ENCODE measurements at regions of chr1 and their contacts with region 1.

Region 1: GRCh38 chr1:32933742-32934322 is 30.8 kb downstream of the RNF19B start:
- DNase-seq: no peak
- ATAC-seq: no peak; the same call in 1 of the 2 replicates
- H3K4me3 Mint-ChIP-seq: no peak overlapping the region
- H3K27ac Mint-ChIP-seq: peak overlapping the region; percentile 94
- H3K4me1 Mint-ChIP-seq: peaks cover 7% of the 10 kb centered on the region
- H3K27me3 Mint-ChIP-seq: peaks cover 5% of the 10 kb centered on the region
- CTCF ChIP-seq: no peak

Region 2: DNA sequence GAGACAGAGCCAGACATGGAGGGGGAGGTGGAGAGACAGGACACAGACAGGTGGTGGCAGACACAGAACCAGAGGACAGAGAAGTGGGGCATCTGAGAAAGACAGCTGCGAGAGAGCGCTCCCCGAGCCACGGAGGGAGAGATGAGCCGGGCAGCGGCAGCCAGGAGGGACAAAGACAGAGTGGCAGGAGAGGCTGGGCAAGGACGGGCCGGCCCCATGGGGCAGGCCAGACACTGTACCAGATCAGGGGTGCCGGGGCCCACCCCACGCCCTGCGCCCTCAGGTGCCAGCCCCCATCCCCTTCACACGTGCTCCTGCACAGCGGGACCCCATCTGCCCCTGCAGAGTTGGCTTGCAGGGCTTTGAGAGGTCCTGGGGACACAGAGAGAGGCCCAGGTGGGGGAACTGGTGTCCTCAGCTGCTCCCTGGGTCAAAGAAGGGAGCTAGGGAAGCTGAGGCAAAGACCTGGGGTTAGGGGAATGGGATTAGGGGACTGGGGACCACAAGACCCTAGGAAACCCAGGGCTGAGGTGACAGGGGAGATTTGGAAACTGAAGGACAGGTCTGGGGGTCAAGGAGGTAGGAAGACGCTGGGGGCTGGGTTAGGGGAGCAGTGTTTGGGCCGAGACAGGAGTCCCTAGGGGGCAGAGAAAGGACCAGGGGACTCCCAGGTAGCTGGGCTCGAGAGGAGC is 63.8 kb before region 1 on chr1:
- CTCF ChIA-PET with region 1: no interaction called
- POLR2A ChIA-PET with region 1: no interaction called
- DNase-seq: no peak
- ATAC-seq: peak; percentile 3; the same call in 1 of the 2 replicates
- H3K4me3 Mint-ChIP-seq: peak overlapping the region; percentile 76
- H3K27ac Mint-ChIP-seq: no peak overlapping the region
- H3K4me1 Mint-ChIP-seq: peaks cover 24% of the 10 kb centered on the region
- H3K27me3 Mint-ChIP-seq: peaks cover 39% of the 10 kb centered on the region
- CTCF ChIP-seq: no peak

Region 3: GRCh38 chr1:32892368-32893197 is 41.2 kb before region 1 on chr1:
- CTCF ChIA-PET with region 1: interaction called, 14 read pairs
- POLR2A ChIA-PET with region 1: no interaction called
- DNase-seq: peak; percentile 92
- ATAC-seq: peak; percentile 85
- H3K4me3 Mint-ChIP-seq: peak overlapping the region; percentile 79
- H3K27ac Mint-ChIP-seq: no peak overlapping the region
- H3K4me1 Mint-ChIP-seq: peaks cover 11% of the 10 kb centered on the region
- H3K27me3 Mint-ChIP-seq: peaks cover 59% of the 10 kb centered on the region
- CTCF ChIP-seq: peak; percentile 97

Region 4: GRCh38 chr1:32984455-32985171 is 50.8 kb after region 1 on chr1:
- CTCF ChIA-PET with region 1: interaction called, 17 read pairs
- POLR2A ChIA-PET with region 1: no interaction called
- DNase-seq: peak; percentile 46
- ATAC-seq: peak; percentile 71
- H3K4me3 Mint-ChIP-seq: no peak overlapping the region; the same call in 1 of the 2 replicates
- H3K27ac Mint-ChIP-seq: peak overlapping the region; percentile 66
- H3K4me1 Mint-ChIP-seq: peaks cover 57% of the 10 kb centered on the region
- H3K27me3 Mint-ChIP-seq: peaks cover 3% of the 10 kb centered on the region; the same call in 1 of the 2 replicates
- CTCF ChIP-seq: no peak

Region 5: DNA sequence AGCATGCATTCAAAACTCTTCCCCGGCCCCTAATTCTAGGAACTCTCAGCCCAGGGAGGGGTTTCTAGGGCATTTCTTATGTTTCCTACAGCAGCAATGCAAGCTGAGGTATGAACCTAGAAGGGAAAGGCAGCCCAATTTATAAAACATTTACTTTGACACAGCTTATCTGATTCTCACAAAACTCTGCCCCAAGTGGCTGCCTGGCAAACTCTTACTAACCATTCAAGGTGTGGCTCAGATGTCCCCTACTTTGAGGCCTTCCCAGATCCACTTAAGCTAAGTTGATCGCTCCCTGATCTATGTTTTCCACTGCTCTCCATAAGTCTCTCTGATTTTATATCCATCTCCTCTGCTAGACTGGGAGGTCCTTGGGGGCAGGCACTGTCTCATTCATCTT is 67.5 kb after region 1 on chr1:
- CTCF ChIA-PET with region 1: interaction called, 29 read pairs
- POLR2A ChIA-PET with region 1: no interaction called
- DNase-seq: no peak
- ATAC-seq: peak; percentile 38
- H3K4me3 Mint-ChIP-seq: no peak overlapping the region
- H3K27ac Mint-ChIP-seq: peak overlapping the region; percentile 54; the same call in 1 of the 2 replicates
- H3K4me1 Mint-ChIP-seq: peaks cover 14% of the 10 kb centered on the region
- H3K27me3 Mint-ChIP-seq: no peaks in the 10 kb centered on the region
- CTCF ChIP-seq: no peak

Region 6: GRCh38 chr1:33055210-33056008 is 121.6 kb after region 1 on chr1:
- CTCF ChIA-PET with region 1: interaction called, 34 read pairs
- POLR2A ChIA-PET with region 1: no interaction called
- DNase-seq: peak; percentile 61
- ATAC-seq: peak; percentile 81
- H3K4me3 Mint-ChIP-seq: no peak overlapping the region
- H3K27ac Mint-ChIP-seq: no peak overlapping the region
- H3K4me1 Mint-ChIP-seq: no peaks in the 10 kb centered on the region
- H3K27me3 Mint-ChIP-seq: peaks cover 9% of the 10 kb centered on the region
- CTCF ChIP-seq: peak; percentile 57

Region 7: GRCh38 chr1:33086384-33086850 is 152.6 kb after region 1 on chr1:
- CTCF ChIA-PET with region 1: interaction called, 27 read pairs
- POLR2A ChIA-PET with region 1: no interaction called
- DNase-seq: peak; percentile 84
- ATAC-seq: peak; percentile 91
- H3K4me3 Mint-ChIP-seq: no peak overlapping the region
- H3K27ac Mint-ChIP-seq: no peak overlapping the region
- H3K4me1 Mint-ChIP-seq: peaks cover 11% of the 10 kb centered on the region
- H3K27me3 Mint-ChIP-seq: peaks cover 51% of the 10 kb centered on the region
- CTCF ChIP-seq: peak; percentile 76